Pancreas (tissue), 10 donors: ENCODE measurements at regions of chr6 and their contacts with region 1.

Region 1: DNA sequence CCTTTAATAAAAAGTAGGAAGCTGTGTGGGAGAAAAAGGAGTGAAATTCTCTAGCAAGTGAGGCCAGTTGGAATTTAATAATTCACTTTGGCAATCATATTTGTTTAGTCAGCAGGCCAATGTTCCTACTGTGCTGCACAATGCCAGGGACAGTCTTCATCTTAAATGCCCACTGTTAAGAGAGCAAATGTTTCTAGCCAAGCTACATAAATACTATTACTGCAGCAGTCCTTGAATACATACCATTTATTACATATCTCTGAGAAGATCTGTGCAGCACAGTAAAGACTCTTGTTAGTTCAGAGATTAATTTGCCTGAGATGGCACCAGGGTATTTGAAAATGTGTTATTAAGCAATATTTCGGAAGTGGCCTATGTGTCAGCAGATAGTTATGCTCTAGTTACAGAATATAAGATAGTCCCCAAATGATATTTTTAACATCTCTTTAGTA is 105.4 kb downstream of the OGFRL1 start:
- DNase-seq: no peak
- ATAC-seq: peak in 3 of 4 donors; percentile 65 to 67 (median 65)
- H3K4me3 ChIP-seq: no peak overlapping the region
- H3K27ac ChIP-seq: peak overlapping the region in 2 of 4 donors; percentile 21 to 26
- H3K4me1 ChIP-seq: peaks cover 0 to 17% (median 11%) of the 10 kb centered on the region in 3 donors
- H3K27me3 ChIP-seq: no peaks in the 10 kb centered on the region
- CTCF ChIP-seq: no peak

Region 2: GRCh38 chr6:71351190-71351589 is 42.8 kb before region 1 on chr6:
- intact Hi-C with region 1: no loop called
- DNase-seq: no peak
- ATAC-seq: peak in 2 of 4 donors; percentile 47 to 52
- H3K4me3 ChIP-seq: no peak overlapping the region
- H3K27ac ChIP-seq: no peak overlapping the region
- H3K4me1 ChIP-seq: peaks cover 0 to 7% (median 7%) of the 10 kb centered on the region in 3 donors
- H3K27me3 ChIP-seq: no peaks in the 10 kb centered on the region
- CTCF ChIP-seq: no peak

Region 3: GRCh38 chr6:71489747-71490315 is 95.8 kb after region 1 on chr6:
- intact Hi-C with region 1: loop called in 1 of 3 experiments (anchors 10 kb)
- DNase-seq: no peak
- ATAC-seq: peak in 3 of 4 donors; percentile 45 to 74 (median 58)
- H3K4me3 ChIP-seq: no peak overlapping the region
- H3K27ac ChIP-seq: no peak overlapping the region
- H3K4me1 ChIP-seq: no peaks in the 10 kb centered on the region
- H3K27me3 ChIP-seq: no peaks in the 10 kb centered on the region
- CTCF ChIP-seq: no peak